Activated CD4-positive, alpha-beta memory T cell treated with anti-CD3 and anti-CD28 coated beads for 36 hours (primary cell): ENCODE measurements at regions of chr3 and their contacts with region 1.

Region 1: DNA sequence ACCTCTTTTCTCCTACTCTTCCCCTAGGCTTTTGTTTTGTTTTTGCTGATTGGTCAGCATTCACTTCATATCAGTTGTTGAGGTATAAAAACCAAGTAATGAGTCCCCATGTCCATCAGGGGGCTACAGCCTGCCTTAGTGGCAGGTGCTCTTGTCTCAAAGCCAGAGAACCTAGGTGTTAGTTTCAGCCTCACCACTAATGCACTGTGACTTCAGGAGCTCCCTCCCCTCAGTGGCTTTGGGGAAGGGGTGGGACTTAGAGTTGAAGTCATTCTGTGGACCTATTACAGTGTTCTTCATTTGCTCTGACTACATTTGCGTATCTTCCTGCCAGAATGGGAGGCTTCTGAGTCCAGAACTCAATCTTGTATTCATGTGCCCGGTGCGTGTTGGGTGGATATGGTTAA is 41.6 kb downstream of the NR2C2 start:
- DNase-seq: peak; percentile 69
- H3K4me3 Mint-ChIP-seq: no peak overlapping the region
- H3K27ac Mint-ChIP-seq: no peak overlapping the region
- H3K4me1 Mint-ChIP-seq: peaks cover 48% of the 10 kb centered on the region
- H3K27me3 Mint-ChIP-seq: no peaks in the 10 kb centered on the region

Region 2: GRCh38 chr3:14482271-14482721 is 506.7 kb before region 1 on chr3:
- CTCF ChIA-PET with region 1: no interaction called
- POLR2A ChIA-PET with region 1: no interaction called
- intact Hi-C with region 1: no loop called
- DNase-seq: no peak
- H3K4me3 Mint-ChIP-seq: no peak overlapping the region
- H3K27ac Mint-ChIP-seq: no peak overlapping the region
- H3K4me1 Mint-ChIP-seq: no peaks in the 10 kb centered on the region
- H3K27me3 Mint-ChIP-seq: no peaks in the 10 kb centered on the region

Region 3: DNA sequence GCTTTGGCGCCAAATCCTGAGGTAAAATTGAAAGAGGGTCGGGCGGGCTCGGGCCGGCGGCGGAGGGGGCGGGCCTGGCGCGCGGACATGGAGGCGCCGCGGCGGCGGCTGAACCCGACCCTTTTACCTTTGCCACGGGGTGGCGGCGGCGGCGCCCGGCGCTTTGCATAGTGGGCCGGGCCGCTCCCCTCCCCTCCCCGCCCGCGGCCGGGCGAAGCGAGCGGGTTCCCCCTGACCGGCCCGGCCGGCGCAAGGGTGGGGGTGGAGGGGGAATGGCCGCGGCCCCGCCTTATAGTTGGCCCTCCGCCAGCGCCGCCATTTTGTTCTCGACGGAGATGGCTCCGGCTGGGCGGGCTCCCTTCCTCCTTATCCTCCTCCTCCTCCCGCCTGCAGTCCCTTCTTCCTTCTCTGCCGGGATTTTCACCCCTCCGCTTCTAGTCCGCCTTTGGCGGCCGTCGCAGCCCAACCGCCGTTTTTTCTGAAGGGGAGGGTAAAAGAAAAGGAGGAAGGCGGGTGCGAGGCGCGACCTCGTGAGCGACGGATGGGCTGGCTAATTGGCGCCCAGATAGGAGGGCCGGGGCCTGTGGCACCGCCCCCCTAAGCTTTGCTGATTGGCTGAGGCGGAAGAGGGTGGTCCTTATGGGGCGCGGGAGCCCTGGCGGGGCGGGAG is 41.0 kb before region 1 on chr3:
- CTCF ChIA-PET with region 1: no interaction called
- POLR2A ChIA-PET with region 1: no interaction called
- intact Hi-C with region 1: no loop called
- DNase-seq: peak; percentile 97
- H3K4me3 Mint-ChIP-seq: peak overlapping the region; percentile 96
- H3K27ac Mint-ChIP-seq: peak overlapping the region; percentile 99
- H3K4me1 Mint-ChIP-seq: peaks cover 50% of the 10 kb centered on the region
- H3K27me3 Mint-ChIP-seq: no peaks in the 10 kb centered on the region

Region 4: GRCh38 chr3:15042936-15043335 is 53.9 kb after region 1 on chr3:
- CTCF ChIA-PET with region 1: no interaction called
- POLR2A ChIA-PET with region 1: no interaction called
- intact Hi-C with region 1: loop called (anchors 5 kb)
- DNase-seq: no peak
- H3K4me3 Mint-ChIP-seq: no peak overlapping the region
- H3K27ac Mint-ChIP-seq: peak overlapping the region; percentile 35
- H3K4me1 Mint-ChIP-seq: peaks cover 33% of the 10 kb centered on the region
- H3K27me3 Mint-ChIP-seq: no peaks in the 10 kb centered on the region